Activated CD4-positive, alpha-beta T cell treated with anti-CD3 and anti-CD28 coated beads for 36 hours (primary cell): ENCODE measurements at regions of chr6 and their contacts with region 1.

Region 1: DNA sequence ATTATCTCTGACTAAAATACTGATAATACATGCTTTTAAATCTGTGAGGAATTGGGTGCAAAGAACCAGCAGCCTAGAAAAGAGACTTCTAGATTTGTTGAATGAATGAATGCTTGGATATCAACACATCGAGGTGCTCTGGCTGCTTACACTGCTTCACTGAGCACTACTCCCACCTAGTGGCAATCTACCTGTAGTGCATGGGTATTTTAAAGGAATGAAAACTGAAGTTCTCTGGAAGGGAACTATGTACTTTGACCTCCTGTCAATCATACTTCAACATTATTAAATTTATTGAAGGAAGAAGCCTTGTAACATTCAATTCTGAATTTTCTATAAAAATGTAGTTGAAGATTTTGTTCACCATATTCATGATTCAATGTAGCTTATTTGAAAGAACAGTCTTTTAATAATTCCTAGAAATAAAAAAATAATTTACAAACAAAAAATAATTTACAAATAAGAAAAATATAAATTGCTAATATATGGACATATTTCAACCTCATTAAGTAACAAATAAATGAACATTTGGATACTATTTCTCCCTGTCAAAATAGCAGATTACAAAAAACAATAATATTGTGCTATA is 111.2 kb upstream of the MMS22L start:
- DNase-seq: peak; percentile 58
- ATAC-seq: peak; percentile 70
- H3K4me3 Mint-ChIP-seq: no peak overlapping the region
- H3K27ac Mint-ChIP-seq: no peak overlapping the region
- H3K4me1 Mint-ChIP-seq: no peaks in the 10 kb centered on the region
- H3K27me3 Mint-ChIP-seq: peaks cover 10% of the 10 kb centered on the region

Region 2: GRCh38 chr6:97068211-97068610 is 326.0 kb before region 1 on chr6:
- CTCF ChIA-PET with region 1: interaction called, 10 read pairs
- POLR2A ChIA-PET with region 1: no interaction called
- intact Hi-C with region 1: loop called (anchors 1 kb)
- DNase-seq: peak; percentile 45
- ATAC-seq: no peak
- H3K4me3 Mint-ChIP-seq: no peak overlapping the region
- H3K27ac Mint-ChIP-seq: no peak overlapping the region
- H3K4me1 Mint-ChIP-seq: peaks cover 3% of the 10 kb centered on the region
- H3K27me3 Mint-ChIP-seq: no peaks in the 10 kb centered on the region